Activated CD8-positive, alpha-beta T cell treated with anti-CD3 and anti-CD28 coated beads for 36 hours (primary cell): ENCODE measurements at regions of chr12 and their contacts with region 1.

Region 1: GRCh38 chr12:26748741-26749431 is 84.1 kb downstream of the ITPR2 start:
- DNase-seq: no peak
- ATAC-seq: peak; percentile 70
- H3K4me3 Mint-ChIP-seq: peak overlapping the region; percentile 51
- H3K27ac Mint-ChIP-seq: peak overlapping the region; percentile 93
- H3K4me1 Mint-ChIP-seq: peaks cover 79% of the 10 kb centered on the region
- H3K27me3 Mint-ChIP-seq: no peaks in the 10 kb centered on the region
- CTCF ChIP-seq: no peak

Region 2: GRCh38 chr12:26287671-26288381 is 461.1 kb before region 1 on chr12:
- CTCF ChIA-PET with region 1: no interaction called
- POLR2A ChIA-PET with region 1: no interaction called
- intact Hi-C with region 1: no loop called
- DNase-seq: no peak
- ATAC-seq: no peak
- H3K4me3 Mint-ChIP-seq: no peak overlapping the region
- H3K27ac Mint-ChIP-seq: no peak overlapping the region
- H3K4me1 Mint-ChIP-seq: peaks cover 2% of the 10 kb centered on the region
- H3K27me3 Mint-ChIP-seq: no peaks in the 10 kb centered on the region
- CTCF ChIP-seq: no peak

Region 3: DNA sequence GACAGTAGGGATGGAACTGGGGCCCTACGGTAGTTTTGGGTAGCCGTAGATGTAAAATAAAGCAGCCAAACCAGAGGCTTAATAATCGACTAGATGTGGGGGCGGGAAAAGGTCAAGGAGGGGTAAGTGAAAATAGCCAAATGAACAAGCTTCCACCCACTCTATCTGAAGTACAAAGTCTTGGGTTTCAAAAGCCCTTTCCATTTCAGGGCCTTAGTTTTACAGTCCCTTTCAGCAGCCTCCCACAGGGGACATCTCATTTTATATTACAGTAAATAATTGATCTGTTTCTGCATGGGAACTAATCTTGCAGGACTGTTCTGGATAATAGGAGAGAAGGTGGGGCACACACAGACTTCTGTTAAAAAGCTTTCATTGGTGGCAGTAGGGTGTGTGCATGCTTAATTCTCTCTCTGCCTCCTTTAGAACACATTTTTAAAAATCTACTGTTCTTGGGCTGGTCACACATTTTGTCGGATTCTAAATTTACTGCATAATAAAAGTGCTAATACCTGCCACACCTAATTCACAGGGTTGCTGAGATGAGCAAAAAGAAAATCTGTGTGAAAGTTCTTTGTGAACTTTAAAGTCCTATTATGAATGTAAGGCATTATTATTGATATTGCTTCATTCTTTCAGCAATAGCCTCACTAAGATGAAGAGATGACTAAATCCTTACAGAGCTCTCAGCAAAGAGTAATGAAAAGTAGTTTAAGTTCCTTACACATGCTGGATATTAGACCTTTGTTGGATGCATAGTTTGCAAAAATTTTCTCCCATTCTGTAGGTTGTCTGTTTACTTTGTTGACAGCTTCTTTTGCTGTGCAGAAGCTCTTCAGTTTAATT is 20.5 kb before region 1 on chr12:
- CTCF ChIA-PET with region 1: interaction called, 5 read pairs
- POLR2A ChIA-PET with region 1: no interaction called
- intact Hi-C with region 1: loop called (anchors 2 kb)
- DNase-seq: peak; percentile 77
- ATAC-seq: peak; percentile 75
- H3K4me3 Mint-ChIP-seq: peak overlapping the region; percentile 7
- H3K27ac Mint-ChIP-seq: peak overlapping the region; percentile 76
- H3K4me1 Mint-ChIP-seq: peaks cover 70% of the 10 kb centered on the region
- H3K27me3 Mint-ChIP-seq: no peaks in the 10 kb centered on the region
- CTCF ChIP-seq: no peak

Region 4: GRCh38 chr12:26777236-26777635 is 28.4 kb after region 1 on chr12:
- CTCF ChIA-PET with region 1: no interaction called
- POLR2A ChIA-PET with region 1: no interaction called
- intact Hi-C with region 1: no loop called
- DNase-seq: no peak
- ATAC-seq: no peak
- H3K4me3 Mint-ChIP-seq: no peak overlapping the region
- H3K27ac Mint-ChIP-seq: no peak overlapping the region
- H3K4me1 Mint-ChIP-seq: peaks cover 6% of the 10 kb centered on the region
- H3K27me3 Mint-ChIP-seq: no peaks in the 10 kb centered on the region
- CTCF ChIP-seq: no peak

Region 5: GRCh38 chr12:26803552-26803951 is 54.7 kb after region 1 on chr12:
- CTCF ChIA-PET with region 1: no interaction called
- POLR2A ChIA-PET with region 1: no interaction called
- intact Hi-C with region 1: loop called (anchors 10 kb)
- DNase-seq: no peak
- ATAC-seq: no peak
- H3K4me3 Mint-ChIP-seq: no peak overlapping the region
- H3K27ac Mint-ChIP-seq: no peak overlapping the region
- H3K4me1 Mint-ChIP-seq: peaks cover 46% of the 10 kb centered on the region
- H3K27me3 Mint-ChIP-seq: no peaks in the 10 kb centered on the region
- CTCF ChIP-seq: no peak